T-cell (primary cell): ENCODE measurements at regions of chr6 and their contacts with region 1.

Region 1: GRCh38 chr6:16585805-16586204 is 175.5 kb downstream of the ATXN1 start:
- DNase-seq: no peak
- ATAC-seq: no peak
- H3K4me3 ChIP-seq: no peak overlapping the region
- H3K4me3 Mint-ChIP-seq: peak overlapping the region in 1 of 3 donors; percentile 42
- H3K27ac ChIP-seq: no peak overlapping the region
- H3K27ac Mint-ChIP-seq: peak overlapping the region in 1 of 2 donors; percentile 0
- H3K4me1 ChIP-seq: no peaks in the 10 kb centered on the region
- H3K4me1 Mint-ChIP-seq: peaks cover 4 to 15% (median 4%) of the 10 kb centered on the region in 3 donors
- H3K27me3 ChIP-seq: no peaks in the 10 kb centered on the region
- H3K27me3 Mint-ChIP-seq: no peaks in the 10 kb centered on the region

Region 2: DNA sequence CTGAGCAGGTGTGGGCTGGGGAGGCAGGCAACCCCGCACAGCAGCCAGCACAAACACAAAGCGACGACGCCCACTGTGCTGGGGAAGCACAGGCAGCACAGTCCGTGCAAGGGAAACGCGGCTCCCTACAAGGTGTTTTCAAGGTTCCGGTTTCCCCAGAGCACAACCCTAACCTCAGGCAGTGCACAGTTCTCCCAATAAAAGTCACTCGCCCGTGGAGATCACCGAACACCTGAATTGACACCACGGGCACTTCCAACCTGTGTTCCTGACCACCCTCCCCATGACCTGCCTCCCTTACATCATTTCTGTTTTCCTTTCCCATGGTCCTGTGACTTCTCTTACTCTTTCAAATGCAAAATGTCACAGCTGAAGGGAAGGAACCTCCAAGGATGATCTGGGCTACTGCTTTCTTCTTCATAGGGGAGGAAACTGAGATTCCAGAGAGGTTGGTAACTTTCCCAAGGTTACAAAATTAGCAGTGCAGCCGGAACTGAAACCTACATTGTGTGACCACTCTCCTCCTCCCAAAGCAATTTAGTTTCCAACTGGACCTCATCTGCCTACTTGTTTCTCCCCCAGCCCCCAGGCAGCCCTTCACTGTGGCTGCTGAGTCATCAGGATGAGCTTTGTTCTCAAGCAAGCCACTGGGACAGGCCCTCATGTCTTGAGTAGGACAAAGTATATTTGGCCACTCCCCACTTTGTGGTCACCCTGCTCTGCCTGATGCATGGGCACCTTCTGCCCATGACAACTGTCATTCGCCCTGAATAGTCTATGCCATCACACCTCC is 50.2 kb after region 1 on chr6:
- CTCF ChIA-PET with region 1: no interaction called
- POLR2A ChIA-PET with region 1: interaction called in 1 of 2 experiments, 13 read pairs
- DNase-seq: no peak
- ATAC-seq: no peak
- H3K4me3 ChIP-seq: no peak overlapping the region
- H3K4me3 Mint-ChIP-seq: no peak overlapping the region
- H3K27ac ChIP-seq: no peak overlapping the region
- H3K27ac Mint-ChIP-seq: no peak overlapping the region
- H3K4me1 ChIP-seq: peaks cover 0 to 9% of the 10 kb centered on the region in 2 experiments
- H3K4me1 Mint-ChIP-seq: peaks cover 18 to 47% (median 31%) of the 10 kb centered on the region in 3 donors
- H3K27me3 ChIP-seq: no peaks in the 10 kb centered on the region
- H3K27me3 Mint-ChIP-seq: no peaks in the 10 kb centered on the region